ENCODE measurements at regions of chr11 and their contacts with region 1.

Region 1: GRCh38 chr11:32279672-32280071 is 155.7 kb downstream of the WT1 start:
- DNase-seq: no peak
- ATAC-seq: no peak
- H3K4me3 ChIP-seq: no peak overlapping the region
- H3K27ac ChIP-seq: no peak overlapping the region
- H3K4me1 ChIP-seq: no peaks in the 10 kb centered on the region
- H3K27me3 ChIP-seq: no peaks in the 10 kb centered on the region
- CTCF ChIP-seq: no peak
- POLR2A ChIP-seq: no peak
- RAD21 ChIP-seq: no peak

Region 2: DNA sequence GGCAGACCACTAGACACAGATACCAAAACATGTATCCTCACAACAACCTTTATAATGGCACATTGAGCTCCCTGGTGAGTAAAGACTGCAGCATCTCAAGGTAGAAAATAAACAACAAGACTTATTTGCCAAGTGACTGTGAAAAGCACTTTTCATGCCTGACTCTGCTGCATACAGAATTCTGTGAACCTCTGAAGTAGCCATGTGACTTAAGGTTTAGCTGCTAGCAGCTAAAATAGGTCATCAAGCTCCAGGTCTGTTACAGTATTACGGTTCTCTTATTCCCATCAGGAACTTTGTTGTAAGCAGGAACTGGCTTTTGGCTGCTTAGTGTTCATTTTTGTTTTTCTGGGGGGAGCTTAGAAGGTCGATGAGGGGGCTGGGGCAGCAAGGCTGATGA is 608.0 kb before region 1 on chr11:
- CTCF ChIA-PET with region 1: no interaction called
- POLR2A ChIA-PET with region 1: no interaction called
- dilution Hi-C with region 1: no loop called
- in situ Hi-C with region 1: no loop called
- intact Hi-C with region 1: no loop called
- DNase-seq: no peak
- ATAC-seq: no peak
- H3K4me3 ChIP-seq: no peak overlapping the region
- H3K27ac ChIP-seq: no peak overlapping the region
- H3K4me1 ChIP-seq: no peaks in the 10 kb centered on the region
- H3K27me3 ChIP-seq: no peaks in the 10 kb centered on the region
- CTCF ChIP-seq: no peak
- POLR2A ChIP-seq: no peak
- RAD21 ChIP-seq: no peak

Region 3: DNA sequence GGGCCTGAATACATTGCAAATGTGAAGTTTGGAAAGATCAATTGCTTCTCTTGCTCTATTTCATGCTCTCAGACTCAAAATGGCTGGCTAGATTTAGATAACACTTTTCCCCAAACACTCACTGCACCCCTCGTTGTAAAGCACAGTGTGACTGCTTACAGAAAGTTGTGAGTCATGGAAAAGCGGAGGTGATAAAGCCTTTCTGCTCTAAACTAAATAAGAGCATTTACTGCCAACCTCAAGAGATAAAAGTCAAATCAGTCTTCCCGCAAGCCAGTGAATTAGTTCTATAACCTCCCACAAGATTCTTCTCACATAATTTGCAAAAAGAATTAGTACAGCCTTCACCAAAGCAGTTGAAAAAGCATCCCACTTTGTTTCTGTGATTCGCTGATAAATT is 13.1 kb before region 1 on chr11:
- CTCF ChIA-PET with region 1: no interaction called
- POLR2A ChIA-PET with region 1: no interaction called
- dilution Hi-C with region 1: no loop called
- in situ Hi-C with region 1: no loop called
- intact Hi-C with region 1: no loop called
- DNase-seq: peak; percentile 4
- ATAC-seq: no peak
- H3K4me3 ChIP-seq: no peak overlapping the region
- H3K27ac ChIP-seq: no peak overlapping the region
- H3K4me1 ChIP-seq: no peaks in the 10 kb centered on the region
- H3K27me3 ChIP-seq: peaks cover 6% of the 10 kb centered on the region
- CTCF ChIP-seq: no peak
- POLR2A ChIP-seq: no peak
- RAD21 ChIP-seq: no peak

Region 4: DNA sequence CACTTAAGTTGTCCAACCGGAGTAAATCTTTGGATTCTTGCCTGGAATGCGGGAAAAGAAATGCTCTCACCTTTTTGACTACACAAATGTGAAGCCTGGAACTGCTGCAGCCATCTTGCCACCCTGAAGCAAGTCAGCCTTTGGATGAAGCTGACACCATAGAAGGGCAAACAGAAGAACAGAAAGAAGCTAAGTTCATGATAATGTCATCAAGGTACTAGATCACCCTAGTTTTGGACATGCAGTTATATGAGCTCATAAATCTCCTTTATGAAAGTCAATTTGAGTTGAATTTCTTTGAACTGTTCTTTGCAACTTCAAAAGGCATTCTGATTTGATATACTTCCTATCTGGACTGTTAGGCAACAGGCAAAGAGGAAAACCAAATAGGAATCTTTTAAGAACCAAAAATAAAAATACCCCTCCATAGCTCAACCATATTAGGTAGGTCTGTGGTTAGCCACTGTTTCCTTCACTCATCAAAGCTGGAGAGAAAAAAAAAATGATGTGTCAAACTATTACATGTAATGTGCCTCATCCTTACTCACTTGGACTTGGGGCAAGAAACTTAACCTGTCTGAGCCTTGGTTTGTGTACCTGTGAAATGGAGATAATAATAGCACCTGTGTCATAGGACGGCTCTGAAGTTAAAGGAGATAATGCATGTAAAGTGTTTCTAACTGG is 63.8 kb after region 1 on chr11:
- CTCF ChIA-PET with region 1: no interaction called
- POLR2A ChIA-PET with region 1: no interaction called
- dilution Hi-C with region 1: no loop called
- in situ Hi-C with region 1: no loop called
- intact Hi-C with region 1: loop called (anchors 10 kb)
- DNase-seq: no peak
- ATAC-seq: no peak
- H3K4me3 ChIP-seq: no peak overlapping the region
- H3K27ac ChIP-seq: no peak overlapping the region
- H3K4me1 ChIP-seq: no peaks in the 10 kb centered on the region
- H3K27me3 ChIP-seq: peaks cover 3% of the 10 kb centered on the region
- CTCF ChIP-seq: no peak
- POLR2A ChIP-seq: no peak
- RAD21 ChIP-seq: no peak

Region 5: DNA sequence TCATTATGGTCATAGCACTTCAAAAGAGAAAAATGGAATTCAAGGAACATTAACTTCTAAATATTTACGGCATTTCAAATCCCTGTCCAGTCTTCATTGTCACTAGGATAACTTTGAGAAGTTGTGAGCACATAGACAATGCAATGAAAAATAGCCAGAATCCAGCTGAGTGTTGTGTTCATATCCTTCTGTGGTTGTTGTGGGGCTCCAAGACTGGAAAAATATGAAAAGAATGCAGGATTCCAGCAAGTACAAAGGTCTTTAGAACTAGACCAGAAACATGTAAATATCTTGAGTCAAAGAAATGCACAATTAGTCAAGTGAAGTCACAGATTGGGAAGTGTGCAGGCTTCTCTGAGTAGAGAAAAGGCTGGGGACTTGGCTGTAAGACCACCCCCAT is 87.0 kb after region 1 on chr11:
- CTCF ChIA-PET with region 1: no interaction called
- POLR2A ChIA-PET with region 1: no interaction called
- dilution Hi-C with region 1: no loop called
- in situ Hi-C with region 1: no loop called
- intact Hi-C with region 1: no loop called
- DNase-seq: no peak
- ATAC-seq: no peak
- H3K4me3 ChIP-seq: no peak overlapping the region
- H3K27ac ChIP-seq: no peak overlapping the region
- H3K4me1 ChIP-seq: no peaks in the 10 kb centered on the region
- H3K27me3 ChIP-seq: no peaks in the 10 kb centered on the region; the same call in 1 of the 2 replicates
- CTCF ChIP-seq: no peak
- POLR2A ChIP-seq: no peak
- RAD21 ChIP-seq: no peak

Region 6: DNA sequence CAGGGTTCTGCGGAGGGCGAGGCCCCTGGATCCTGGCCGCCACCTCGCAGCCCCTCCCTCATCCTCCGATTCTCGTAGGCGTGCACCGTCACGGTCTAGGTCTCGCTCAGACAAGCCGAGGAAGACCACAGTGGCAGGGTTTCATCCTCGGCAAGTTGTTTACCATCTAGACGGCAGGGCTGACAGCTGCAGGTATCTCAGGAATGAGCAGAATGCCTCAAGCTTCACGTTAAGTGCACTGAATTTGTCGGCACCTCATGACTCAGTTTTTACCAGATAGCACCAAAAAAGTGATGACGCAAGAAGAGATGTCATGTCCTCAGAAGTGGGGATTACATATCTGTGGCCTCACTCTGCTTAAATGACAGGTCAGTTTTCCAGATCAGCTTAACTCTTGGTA is 120.5 kb after region 1 on chr11:
- CTCF ChIA-PET with region 1: no interaction called
- POLR2A ChIA-PET with region 1: no interaction called
- dilution Hi-C with region 1: no loop called
- in situ Hi-C with region 1: no loop called
- intact Hi-C with region 1: no loop called
- DNase-seq: peak; percentile 10
- ATAC-seq: no peak
- H3K4me3 ChIP-seq: no peak overlapping the region
- H3K27ac ChIP-seq: no peak overlapping the region
- H3K4me1 ChIP-seq: no peaks in the 10 kb centered on the region
- H3K27me3 ChIP-seq: peaks cover 1% of the 10 kb centered on the region; the same call in 1 of the 2 replicates
- CTCF ChIP-seq: no peak
- POLR2A ChIP-seq: no peak
- RAD21 ChIP-seq: no peak

Measured in IMR-90 (cell line).